T-cell (primary cell): ENCODE measurements at regions of chr2 and their contacts with region 1.

Region 1: DNA sequence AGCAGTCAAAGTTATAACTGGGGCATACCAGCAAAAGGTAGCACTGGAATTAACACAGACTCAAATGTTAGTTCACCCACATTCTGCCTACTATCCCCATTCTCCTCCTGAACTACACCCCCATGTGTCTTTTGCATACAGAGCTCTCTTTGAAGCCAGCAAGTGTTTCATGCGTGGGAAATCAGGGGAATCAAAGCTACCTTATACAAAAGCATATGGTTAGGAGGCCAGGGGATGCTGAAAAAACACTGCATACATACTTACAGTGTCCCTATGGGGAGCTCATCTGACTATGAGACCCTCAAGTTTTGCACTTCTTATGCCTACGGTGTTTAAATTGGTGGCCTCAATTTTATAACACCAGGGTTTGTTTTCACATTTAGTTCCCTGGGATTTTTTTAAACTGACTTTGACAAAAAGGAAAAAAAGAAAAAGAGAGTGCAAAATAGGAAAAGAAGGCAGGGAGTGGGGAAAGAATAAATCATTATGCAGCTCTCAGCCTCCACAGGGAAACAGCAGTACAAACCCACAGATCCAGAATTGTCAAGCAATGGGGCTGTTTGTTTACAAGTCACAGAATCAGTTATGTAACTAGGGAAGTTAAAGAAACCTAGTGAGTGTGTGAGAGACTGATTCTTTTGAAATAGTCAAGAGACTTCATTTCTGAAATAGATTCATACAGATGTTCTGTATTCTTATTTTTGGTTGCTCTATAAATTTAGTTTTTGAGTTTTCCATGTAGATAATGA is 20.1 kb upstream of the PPP3R1 start:
- DNase-seq: no peak
- ATAC-seq: no peak
- H3K4me3 ChIP-seq: no peak overlapping the region
- H3K4me3 Mint-ChIP-seq: no peak overlapping the region
- H3K27ac ChIP-seq: no peak overlapping the region
- H3K27ac Mint-ChIP-seq: no peak overlapping the region
- H3K4me1 ChIP-seq: no peaks in the 10 kb centered on the region
- H3K4me1 Mint-ChIP-seq: no peaks in the 10 kb centered on the region
- H3K27me3 ChIP-seq: peaks cover 0 to 2% of the 10 kb centered on the region in 2 experiments
- H3K27me3 Mint-ChIP-seq: peaks cover 6 to 22% of the 10 kb centered on the region in 2 donors

Region 2: DNA sequence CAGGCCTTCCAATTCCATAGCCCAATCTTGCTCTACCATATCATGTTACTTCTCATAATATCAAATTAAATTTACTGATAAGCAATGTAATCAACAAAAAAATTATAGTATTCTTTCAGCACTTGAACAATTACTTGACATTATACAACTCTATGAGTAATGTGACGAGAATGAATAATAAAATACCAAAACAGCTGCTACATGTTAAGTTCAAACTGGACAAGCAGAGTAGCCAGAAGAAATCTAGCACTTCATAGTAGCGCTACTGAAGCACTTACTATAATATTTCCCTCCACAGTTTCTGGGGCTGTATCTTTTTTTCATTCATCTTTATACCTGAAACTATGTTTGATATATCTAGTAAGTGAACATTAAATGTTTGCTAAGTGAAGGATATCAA is 35.0 kb before region 1 on chr2:
- CTCF ChIA-PET with region 1: no interaction called
- POLR2A ChIA-PET with region 1: interaction called in 1 of 2 experiments, 12 read pairs
- DNase-seq: no peak
- ATAC-seq: no peak
- H3K4me3 ChIP-seq: no peak overlapping the region
- H3K4me3 Mint-ChIP-seq: peak overlapping the region in 1 of 3 donors; percentile 62
- H3K27ac ChIP-seq: no peak overlapping the region
- H3K27ac Mint-ChIP-seq: no peak overlapping the region
- H3K4me1 ChIP-seq: peaks cover 21 to 35% of the 10 kb centered on the region in 2 experiments
- H3K4me1 Mint-ChIP-seq: peaks cover 89 to 92% (median 90%) of the 10 kb centered on the region in 3 donors
- H3K27me3 ChIP-seq: no peaks in the 10 kb centered on the region
- H3K27me3 Mint-ChIP-seq: no peaks in the 10 kb centered on the region